ENCODE measurements at regions of chr6 and their contacts with region 1.

Region 1: DNA sequence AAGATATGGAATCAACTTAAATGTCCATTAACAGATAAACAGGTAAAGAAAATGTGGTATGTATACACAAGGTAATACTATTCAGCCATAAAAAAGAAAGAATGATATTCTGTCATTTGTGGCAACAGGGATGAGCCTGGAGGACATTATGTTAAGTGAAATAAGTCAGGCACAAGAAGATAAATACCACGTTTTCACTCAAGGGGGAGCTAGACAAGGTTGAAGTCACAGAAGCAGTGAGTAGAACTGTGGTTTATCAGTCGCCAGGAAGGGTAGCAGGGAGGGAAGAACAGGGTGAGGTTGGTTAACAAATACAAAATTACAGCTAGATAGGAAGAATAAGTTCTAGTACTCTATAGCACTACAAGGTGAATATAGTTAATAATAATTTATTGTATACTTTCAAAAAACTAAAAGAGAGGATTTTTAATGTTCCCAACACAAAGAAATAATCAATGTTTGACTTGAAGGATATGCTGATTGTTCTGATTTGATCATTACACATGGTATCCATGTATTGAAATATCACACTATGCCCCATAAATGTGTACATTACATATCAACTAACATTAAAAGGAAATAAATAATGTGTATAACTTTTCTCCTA is 21.1 kb downstream of the RTN4IP1 start:
- DNase-seq: peak; percentile 58
- H3K4me3 Mint-ChIP-seq: no peak overlapping the region
- H3K27ac Mint-ChIP-seq: no peak overlapping the region
- H3K4me1 Mint-ChIP-seq: peaks cover 24% of the 10 kb centered on the region
- H3K27me3 Mint-ChIP-seq: no peaks in the 10 kb centered on the region
- CTCF ChIP-seq: peak; percentile 49

Region 2: GRCh38 chr6:106692112-106692818 is 84.1 kb after region 1 on chr6:
- CTCF ChIA-PET with region 1: no interaction called
- intact Hi-C with region 1: loop called (anchors 2 kb)
- DNase-seq: peak; percentile 69
- H3K4me3 Mint-ChIP-seq: no peak overlapping the region
- H3K27ac Mint-ChIP-seq: peak overlapping the region; percentile 64
- H3K4me1 Mint-ChIP-seq: peaks cover 27% of the 10 kb centered on the region
- H3K27me3 Mint-ChIP-seq: no peaks in the 10 kb centered on the region
- CTCF ChIP-seq: no peak

Region 3: GRCh38 chr6:106739387-106739786 is 131.2 kb after region 1 on chr6:
- CTCF ChIA-PET with region 1: interaction called, 4 read pairs
- intact Hi-C with region 1: loop called (anchors 5 kb)
- DNase-seq: peak; percentile 70
- H3K4me3 Mint-ChIP-seq: no peak overlapping the region
- H3K27ac Mint-ChIP-seq: peak overlapping the region; percentile 85
- H3K4me1 Mint-ChIP-seq: peaks cover 80% of the 10 kb centered on the region
- H3K27me3 Mint-ChIP-seq: no peaks in the 10 kb centered on the region
- CTCF ChIP-seq: no peak

Region 4: GRCh38 chr6:106883808-106884262 is 275.7 kb after region 1 on chr6:
- CTCF ChIA-PET with region 1: no interaction called
- intact Hi-C with region 1: loop called (anchors 10 kb)
- DNase-seq: no peak
- H3K4me3 Mint-ChIP-seq: no peak overlapping the region
- H3K27ac Mint-ChIP-seq: no peak overlapping the region
- H3K4me1 Mint-ChIP-seq: peaks cover 56% of the 10 kb centered on the region
- H3K27me3 Mint-ChIP-seq: no peaks in the 10 kb centered on the region
- CTCF ChIP-seq: no peak

Region 5: GRCh38 chr6:107314531-107314939 is 706.4 kb after region 1 on chr6:
- CTCF ChIA-PET with region 1: no interaction called
- intact Hi-C with region 1: no loop called
- DNase-seq: no peak
- H3K4me3 Mint-ChIP-seq: no peak overlapping the region
- H3K27ac Mint-ChIP-seq: no peak overlapping the region
- H3K4me1 Mint-ChIP-seq: no peaks in the 10 kb centered on the region
- H3K27me3 Mint-ChIP-seq: no peaks in the 10 kb centered on the region
- CTCF ChIP-seq: no peak